ENCODE measurements at regions of chr6 and their contacts with region 1.

Region 1: DNA sequence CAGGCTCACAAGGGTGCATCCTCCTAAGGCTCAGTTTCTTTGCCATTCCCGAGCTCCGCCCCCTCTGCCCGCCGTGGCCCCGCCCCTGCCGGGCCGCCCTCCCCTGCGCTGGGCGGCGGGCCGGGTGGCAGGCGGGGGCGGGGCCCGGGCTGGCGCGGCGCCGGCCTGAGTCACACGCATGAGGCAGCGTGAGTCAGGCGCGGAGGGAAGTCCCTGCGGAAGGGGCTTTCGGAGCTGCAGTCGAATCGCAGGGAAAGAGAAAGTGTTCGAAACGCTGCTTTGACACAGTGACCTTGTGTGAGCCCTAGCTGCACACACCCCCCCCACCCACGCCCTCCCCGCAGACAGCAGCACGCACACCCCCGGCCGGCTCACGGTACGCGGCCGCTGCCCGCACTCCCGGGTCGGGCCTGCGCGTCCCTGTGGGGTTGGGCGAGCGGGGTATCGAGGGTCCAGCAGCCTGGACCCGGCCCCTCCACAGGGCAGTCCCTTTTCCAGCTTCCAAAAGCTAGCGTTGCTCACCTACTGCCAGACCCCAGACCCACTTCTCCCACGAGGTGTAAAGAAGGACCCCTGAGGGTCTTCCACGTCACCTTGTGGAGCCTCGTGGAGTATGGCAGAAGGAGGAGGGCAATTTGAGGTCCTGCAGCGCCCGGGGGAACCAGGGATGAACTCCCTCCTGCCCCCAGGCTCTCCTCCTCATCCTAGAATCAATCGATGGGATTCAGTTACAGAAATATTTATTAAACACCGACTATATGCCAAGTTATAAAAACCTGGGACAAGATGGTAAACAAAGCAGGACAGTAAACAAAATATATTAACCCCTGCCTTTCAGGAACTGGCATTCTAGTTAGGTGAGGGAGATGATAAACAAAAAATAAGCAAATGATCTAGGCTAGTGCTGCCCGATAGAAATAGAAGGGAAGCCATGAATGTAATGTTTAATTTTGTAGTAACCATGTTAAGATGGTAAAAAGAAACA is 12.4 kb upstream of the HMGA1 start:
- DNase-seq: peak; percentile 97
- ATAC-seq: peak; percentile 86
- H3K4me3 ChIP-seq: peak overlapping the region; percentile 68
- H3K27ac ChIP-seq: peak overlapping the region; percentile 88
- H3K4me1 ChIP-seq: peaks cover 46% of the 10 kb centered on the region
- H3K27me3 ChIP-seq: no peaks in the 10 kb centered on the region
- CTCF ChIP-seq: no peak

Region 2: DNA sequence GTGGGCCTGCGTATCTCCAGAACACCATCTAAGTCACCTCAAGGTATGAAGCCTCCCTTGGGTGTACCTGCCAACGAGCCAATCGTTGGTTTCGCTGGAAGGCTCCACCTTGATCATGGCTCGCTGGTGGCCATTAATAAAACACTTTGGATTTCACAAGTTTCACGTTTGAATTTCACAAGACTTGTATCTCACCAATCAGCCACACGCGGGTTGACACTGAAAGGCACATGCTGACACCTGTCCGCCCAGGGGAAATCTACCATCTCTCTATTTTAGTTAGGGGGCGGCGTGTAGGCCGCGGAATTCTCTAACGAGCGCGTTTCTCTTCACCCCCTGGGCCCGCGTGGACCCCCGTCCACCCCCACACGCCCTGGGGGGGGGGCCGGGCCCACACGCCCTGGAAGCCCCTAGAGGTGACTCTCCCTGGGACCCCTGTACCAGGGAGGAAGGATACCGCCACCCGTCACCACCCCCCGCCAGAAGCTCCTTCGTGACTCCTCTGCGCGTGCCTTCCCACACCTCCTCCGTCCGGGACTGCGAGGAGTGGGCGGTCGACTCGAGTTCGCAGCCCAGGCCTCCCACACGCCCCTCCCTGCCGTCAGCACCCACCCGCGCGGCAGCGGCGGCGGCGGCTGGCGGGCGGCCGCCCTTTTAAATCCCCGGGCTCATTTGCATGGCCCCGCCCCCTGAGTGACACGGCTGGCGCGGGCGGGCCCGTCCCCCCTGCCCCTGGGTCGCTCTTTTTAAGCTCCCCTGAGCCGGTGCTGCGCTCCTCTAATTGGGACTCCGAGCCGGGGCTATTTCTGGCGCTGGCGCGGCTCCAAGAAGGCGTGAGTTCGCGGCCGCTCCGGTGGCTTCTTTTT is 12.1 kb after region 1 on chr6 and contains the start of gene HMGA1:
- CTCF ChIA-PET with region 1: interaction called, 4 read pairs
- POLR2A ChIA-PET with region 1: interaction called, 29 read pairs
- intact Hi-C with region 1: no loop called
- DNase-seq: peak; percentile 94
- ATAC-seq: peak; percentile 63
- H3K4me3 ChIP-seq: peak within 1 kb of the TSS; percentile 94
- H3K27ac ChIP-seq: peak within 1 kb of the TSS; percentile 81
- H3K4me1 ChIP-seq: peaks cover 42% of the 10 kb centered on the region
- H3K27me3 ChIP-seq: no peaks in the 10 kb centered on the region
- CTCF ChIP-seq: 0 out of 2 replicates have a peak, but pooled peaks have one; percentile 11
- total RNA-seq, gene HMGA1: 1,115 and 1,441 TPM in 2 replicates

Region 3: DNA sequence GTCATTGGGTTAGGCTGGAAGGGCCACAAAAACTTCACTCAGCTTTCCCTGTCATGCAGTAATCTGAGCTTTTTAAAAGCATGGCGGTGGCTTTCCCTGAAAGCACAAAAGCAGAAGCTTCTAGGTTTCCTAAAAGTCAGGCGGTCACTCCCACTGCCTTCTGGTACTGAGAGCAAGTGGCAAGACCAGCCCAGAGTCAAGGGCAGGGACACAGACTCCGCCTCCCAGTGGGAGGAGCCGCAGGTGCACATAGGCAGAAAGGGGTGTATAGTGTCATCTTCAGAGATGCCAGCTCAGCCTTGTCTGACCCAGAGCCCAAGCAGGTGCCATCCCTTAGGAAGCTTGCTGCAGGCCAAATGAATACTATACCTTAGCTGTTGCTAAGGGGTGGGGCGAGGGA is 223.7 kb after region 1 on chr6:
- CTCF ChIA-PET with region 1: no interaction called
- POLR2A ChIA-PET with region 1: no interaction called
- intact Hi-C with region 1: no loop called
- DNase-seq: peak; percentile 30
- ATAC-seq: peak; percentile 58
- H3K4me3 ChIP-seq: no peak overlapping the region
- H3K27ac ChIP-seq: no peak overlapping the region
- H3K4me1 ChIP-seq: peaks cover 9% of the 10 kb centered on the region
- H3K27me3 ChIP-seq: no peaks in the 10 kb centered on the region
- CTCF ChIP-seq: no peak